Left cardiac atrium (tissue), 4 donors: ENCODE measurements at regions of chr1 and their contacts with region 1.

Region 1: GRCh38 chr1:111990878-111991718 is 1.6 kb upstream of the KCND3 start:
- DNase-seq: peak; percentile 83
- ATAC-seq: peak; percentile 69 to 82

Region 2: DNA sequence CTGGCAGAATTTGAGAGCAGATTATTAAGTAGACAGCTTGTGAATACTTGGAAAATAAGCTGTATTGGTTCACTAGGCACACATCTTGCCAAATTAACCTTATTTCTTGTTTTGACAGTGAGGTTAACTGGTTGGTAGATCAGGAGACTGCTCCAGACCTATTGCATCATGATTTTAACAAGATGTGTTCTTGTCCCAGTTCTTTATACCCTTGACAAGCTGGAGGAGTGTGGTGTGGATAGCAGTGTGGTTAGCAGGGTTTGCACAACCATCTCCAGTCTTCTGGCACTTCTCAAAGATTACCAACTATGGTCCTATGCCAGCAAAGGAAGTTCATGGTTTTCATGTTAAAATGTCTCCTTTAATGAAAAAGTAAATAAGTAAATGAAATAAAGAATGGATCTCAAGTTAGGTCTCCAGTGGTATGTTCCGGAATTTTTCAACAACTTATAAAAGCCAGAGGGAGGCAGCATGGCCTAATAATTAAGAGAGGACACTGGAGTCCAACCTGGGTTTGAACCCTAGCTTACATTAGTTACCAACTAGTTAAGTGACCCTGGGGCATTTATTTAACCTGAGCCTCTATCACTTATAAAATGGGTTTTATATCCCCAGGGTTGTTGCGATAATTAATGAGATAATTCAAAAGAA is 201.3 kb before region 1 on chr1:
- intact Hi-C with region 1: loop called in 1 of 2 experiments (anchors 10 kb)
- DNase-seq: no peak
- ATAC-seq: peak; percentile 64 to 67

Region 3: DNA sequence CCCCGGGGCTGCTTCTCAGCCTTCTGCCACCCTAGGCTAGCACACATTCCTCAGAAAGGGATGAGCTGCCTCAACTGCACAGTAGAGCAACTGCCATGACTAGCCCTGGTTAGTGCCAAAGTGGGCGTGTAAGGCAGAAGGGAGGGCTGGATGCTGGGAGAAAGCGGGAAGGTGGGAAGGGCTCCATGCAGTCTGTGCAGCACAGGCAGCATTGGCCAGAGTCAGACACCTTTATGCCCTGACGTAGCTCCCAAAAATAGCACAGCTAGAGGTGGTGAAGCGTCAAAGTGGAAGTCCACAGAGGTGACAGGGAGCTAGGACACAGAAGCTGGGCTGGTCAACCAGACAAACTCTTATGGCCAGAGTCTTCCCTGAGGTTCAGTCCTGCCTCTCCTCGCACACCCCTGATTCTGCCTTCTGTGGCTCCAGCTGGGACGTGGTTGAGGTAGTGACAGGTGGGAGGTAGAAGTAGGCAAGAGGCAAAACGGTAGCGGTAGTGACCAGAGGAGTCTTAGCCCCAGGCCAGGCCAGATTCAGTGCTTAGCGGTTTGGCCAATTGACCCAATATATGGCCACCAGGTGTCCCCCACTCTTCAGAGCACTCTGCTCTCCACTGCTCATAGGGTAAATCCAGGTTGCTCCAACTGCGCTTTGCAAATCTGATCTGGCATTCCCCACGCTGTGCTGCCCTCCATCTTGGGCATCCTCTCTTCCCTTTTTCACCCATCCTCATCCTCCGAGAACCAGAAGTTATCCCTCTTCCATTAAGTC is 189.8 kb before region 1 on chr1:
- intact Hi-C with region 1: loop called (anchors 2 to 10 kb)
- DNase-seq: peak; percentile 52
- ATAC-seq: peak; percentile 90 to 92

Region 4: GRCh38 chr1:112144733-112145426 is 153.8 kb after region 1 on chr1:
- intact Hi-C with region 1: loop called in 1 of 2 experiments (anchors 10 kb)
- DNase-seq: no peak
- ATAC-seq: peak; percentile 89 to 92

Region 5: DNA sequence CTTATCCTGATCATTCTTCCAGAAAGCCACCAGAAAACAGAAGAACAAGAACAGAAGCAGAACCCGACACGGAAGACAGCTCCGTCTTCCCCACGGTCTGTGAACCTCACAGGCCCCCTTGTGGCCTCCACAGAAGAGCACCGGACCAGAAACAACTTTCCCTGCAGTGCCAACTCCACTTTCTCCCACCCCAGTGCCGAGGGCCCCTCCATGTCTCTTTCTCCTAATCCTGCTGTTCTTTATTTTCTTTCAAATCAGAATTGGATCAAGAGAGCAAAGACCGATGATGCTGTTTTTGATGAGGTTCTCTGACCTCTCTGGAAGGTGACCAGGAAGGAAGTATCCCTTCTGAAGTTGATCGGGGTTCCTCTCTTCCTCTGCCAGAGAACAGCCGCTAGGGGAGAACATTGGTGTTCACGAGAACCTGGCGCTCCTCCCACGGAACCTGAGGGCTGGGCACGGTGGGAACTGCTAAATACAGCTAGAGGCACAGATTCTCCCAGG is 346.0 kb after region 1 on chr1:
- intact Hi-C with region 1: loop called in 1 of 2 experiments (anchors 5 kb)
- DNase-seq: peak; percentile 55
- ATAC-seq: peak; percentile 89 to 91